IMR-90 (cell line): ENCODE measurements at regions of chr11 and their contacts with region 1.

Region 1: GRCh38 chr11:20247591-20248007 is 87.3 kb upstream of the DBX1 start:
- DNase-seq: no peak
- ATAC-seq: no peak
- H3K4me3 ChIP-seq: no peak overlapping the region
- H3K27ac ChIP-seq: no peak overlapping the region
- H3K4me1 ChIP-seq: no peaks in the 10 kb centered on the region
- H3K27me3 ChIP-seq: peaks cover 3% of the 10 kb centered on the region; the same call in 1 of the 2 replicates
- CTCF ChIP-seq: no peak
- POLR2A ChIP-seq: no peak
- RAD21 ChIP-seq: no peak

Region 2: GRCh38 chr11:20213790-20214189 is 33.8 kb before region 1 on chr11:
- CTCF ChIA-PET with region 1: no interaction called
- POLR2A ChIA-PET with region 1: no interaction called
- dilution Hi-C with region 1: no loop called
- in situ Hi-C with region 1: no loop called
- intact Hi-C with region 1: loop called (anchors 5 kb)
- DNase-seq: no peak
- ATAC-seq: no peak
- H3K4me3 ChIP-seq: no peak overlapping the region
- H3K27ac ChIP-seq: no peak overlapping the region
- H3K4me1 ChIP-seq: no peaks in the 10 kb centered on the region
- H3K27me3 ChIP-seq: peaks cover 15% of the 10 kb centered on the region
- CTCF ChIP-seq: no peak
- POLR2A ChIP-seq: no peak
- RAD21 ChIP-seq: no peak